ENCODE measurements at regions of chr11 and their contacts with region 1.

Region 1: DNA sequence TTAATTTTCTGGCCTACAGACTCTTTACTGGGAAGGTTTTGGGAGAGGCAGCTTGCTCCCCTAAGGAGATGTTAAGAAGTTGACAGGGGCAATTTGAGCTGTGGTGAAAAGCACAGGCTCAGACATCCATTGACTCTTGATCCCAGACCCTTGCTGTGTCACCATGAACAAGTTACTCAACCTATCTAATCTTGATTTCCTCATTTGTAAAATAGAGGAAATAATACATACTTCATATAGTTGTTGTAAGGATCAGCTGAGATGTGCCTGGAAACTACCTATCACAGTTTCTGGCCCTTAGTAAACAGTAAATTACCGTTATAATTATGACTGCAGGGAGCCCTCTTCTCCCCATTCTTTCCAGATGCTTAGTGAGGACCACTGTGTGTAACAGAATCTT is 16.6 kb upstream of the SCGB1D4 start:
- DNase-seq: no peak
- ATAC-seq: no peak
- H3K4me3 ChIP-seq: no peak overlapping the region
- H3K27ac ChIP-seq: no peak overlapping the region
- H3K4me1 ChIP-seq: peaks cover 3% of the 10 kb centered on the region in 2 donors
- H3K27me3 ChIP-seq: peaks cover 4 to 51% of the 10 kb centered on the region in 2 donors
- CTCF ChIP-seq: no peak

Region 2: GRCh38 chr11:62169935-62170548 is 145.4 kb before region 1 on chr11:
- intact Hi-C with region 1: loop called in 1 of 2 experiments (anchors 10 kb)
- DNase-seq: no peak
- ATAC-seq: no peak
- H3K4me3 ChIP-seq: no peak overlapping the region
- H3K27ac ChIP-seq: no peak overlapping the region
- H3K4me1 ChIP-seq: no peaks in the 10 kb centered on the region
- H3K27me3 ChIP-seq: peaks cover 0 to 63% of the 10 kb centered on the region in 2 donors
- CTCF ChIP-seq: no peak

Region 3: DNA sequence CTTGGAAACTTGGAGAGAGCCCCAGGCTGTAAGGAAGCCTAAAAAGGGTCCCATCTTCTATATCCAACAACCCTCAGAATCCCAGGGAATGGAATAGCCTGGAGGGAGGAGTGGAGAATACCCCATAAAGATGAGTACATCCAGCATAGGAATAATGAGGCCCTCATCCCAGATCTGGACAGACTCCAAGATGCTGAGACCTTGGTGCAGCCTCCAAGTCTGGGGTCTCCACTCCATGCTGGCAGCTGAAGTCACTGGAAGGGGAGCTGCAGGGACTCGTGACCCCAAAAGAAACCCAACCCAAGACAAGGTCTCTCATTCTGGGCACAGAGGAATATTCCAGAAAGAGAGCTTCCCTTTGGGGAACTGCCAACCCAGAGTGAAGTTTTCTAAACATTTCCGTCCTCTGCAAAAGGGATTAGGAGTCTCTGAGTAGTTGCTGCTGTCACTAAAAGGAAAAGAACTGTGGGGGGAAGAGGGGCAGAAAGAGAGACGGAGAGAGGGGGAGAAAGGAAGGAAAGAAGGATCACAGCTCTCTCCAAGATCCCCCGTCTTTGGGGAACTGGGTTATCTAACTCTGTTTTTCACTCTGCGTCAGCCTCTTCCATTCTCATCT is 104.0 kb after region 1 on chr11:
- intact Hi-C with region 1: no loop called
- DNase-seq: peak in 2 of 4 donors; percentile 95 to 96
- ATAC-seq: peak; percentile 39
- H3K4me3 ChIP-seq: no peak overlapping the region
- H3K27ac ChIP-seq: peak overlapping the region in 1 of 2 donors; percentile 62
- H3K4me1 ChIP-seq: peaks cover 1 to 4% of the 10 kb centered on the region in 2 donors
- H3K27me3 ChIP-seq: no peaks in the 10 kb centered on the region
- CTCF ChIP-seq: no peak

Region 4: DNA sequence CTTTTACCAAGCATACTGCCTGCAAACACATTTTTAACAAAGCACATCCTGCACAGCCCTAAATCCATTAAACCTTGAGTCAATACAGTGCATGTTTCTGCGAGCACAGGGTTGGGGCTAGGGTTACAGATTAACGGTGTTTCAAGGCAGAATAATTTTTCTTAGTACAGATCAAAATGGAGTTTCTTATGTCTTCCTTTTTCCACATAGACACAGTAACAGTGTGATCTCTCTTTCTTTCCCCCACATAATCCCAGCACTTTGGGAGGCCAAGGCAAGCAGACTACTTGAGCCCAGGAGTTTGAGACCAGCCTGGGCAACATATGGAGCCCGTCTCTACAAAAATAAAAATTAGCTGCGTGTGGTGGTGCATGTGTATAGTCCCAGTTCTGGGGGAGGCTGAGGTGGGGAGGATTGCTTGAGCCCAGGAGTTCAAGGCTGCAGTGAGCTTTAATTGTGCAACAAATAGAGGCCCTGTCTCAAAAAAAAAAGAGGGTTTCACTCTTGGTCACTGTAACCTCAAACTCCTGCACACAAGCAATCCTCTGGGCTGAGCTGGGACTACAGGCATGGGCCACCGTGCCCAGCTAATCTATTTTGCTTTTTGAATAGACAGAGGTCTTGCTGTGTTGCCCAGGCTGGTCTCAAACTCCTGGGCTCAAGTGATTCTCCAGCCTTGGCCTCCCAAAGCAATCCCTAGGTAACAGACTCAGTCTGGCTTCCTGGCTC is 545.6 kb after region 1 on chr11:
- intact Hi-C with region 1: no loop called
- DNase-seq: no peak
- ATAC-seq: no peak
- H3K4me3 ChIP-seq: no peak overlapping the region
- H3K27ac ChIP-seq: no peak overlapping the region
- H3K4me1 ChIP-seq: peaks cover 3 to 31% of the 10 kb centered on the region in 2 donors
- H3K27me3 ChIP-seq: no peaks in the 10 kb centered on the region
- CTCF ChIP-seq: no peak

Measured in left lung (tissue), 14 donors.